IMR-90 (cell line): ENCODE measurements at regions of chr3 and their contacts with region 1.

Region 1: DNA sequence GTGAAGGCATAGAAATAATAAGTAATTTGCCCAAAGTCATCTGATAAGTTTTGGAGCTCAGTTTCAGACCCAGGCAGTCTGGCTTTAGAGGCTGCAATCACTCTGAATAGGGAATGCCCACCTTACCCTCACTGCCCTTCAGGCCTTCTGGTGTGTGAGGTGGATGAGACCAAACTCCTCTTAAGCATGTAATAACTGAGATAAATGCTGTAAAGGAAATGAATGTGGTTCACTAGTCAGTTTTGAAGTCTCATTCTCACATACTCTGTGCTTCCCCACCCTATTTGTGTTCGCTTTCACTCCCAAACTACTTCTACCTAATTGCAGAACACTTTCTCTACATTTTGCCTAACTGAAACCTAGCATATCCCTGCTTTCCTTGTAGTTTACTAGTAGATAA is 144.1 kb downstream of the FILIP1L start:
- DNase-seq: no peak
- ATAC-seq: no peak
- H3K4me3 ChIP-seq: no peak overlapping the region
- H3K27ac ChIP-seq: no peak overlapping the region
- H3K4me1 ChIP-seq: peaks cover 12% of the 10 kb centered on the region
- H3K27me3 ChIP-seq: no peaks in the 10 kb centered on the region
- CTCF ChIP-seq: no peak
- POLR2A ChIP-seq: no peak
- RAD21 ChIP-seq: no peak

Region 2: GRCh38 chr3:100023150-100023549 is 53.0 kb after region 1 on chr3:
- CTCF ChIA-PET with region 1: no interaction called
- POLR2A ChIA-PET with region 1: no interaction called
- dilution Hi-C with region 1: no loop called
- in situ Hi-C with region 1: no loop called
- intact Hi-C with region 1: loop called (anchors 5 kb)
- DNase-seq: peak; percentile 14
- ATAC-seq: peak; percentile 35; the same call in 1 of the 2 replicates
- H3K4me3 ChIP-seq: no peak overlapping the region
- H3K27ac ChIP-seq: no peak overlapping the region
- H3K4me1 ChIP-seq: peaks cover 11% of the 10 kb centered on the region
- H3K27me3 ChIP-seq: no peaks in the 10 kb centered on the region
- CTCF ChIP-seq: no peak
- POLR2A ChIP-seq: no peak
- RAD21 ChIP-seq: no peak

Region 3: GRCh38 chr3:100159331-100160153 is 189.3 kb after region 1 on chr3:
- CTCF ChIA-PET with region 1: no interaction called
- POLR2A ChIA-PET with region 1: no interaction called
- dilution Hi-C with region 1: no loop called
- in situ Hi-C with region 1: no loop called
- intact Hi-C with region 1: no loop called
- DNase-seq: peak; percentile 84
- ATAC-seq: peak; percentile 83
- H3K4me3 ChIP-seq: no peak overlapping the region
- H3K27ac ChIP-seq: peak overlapping the region; percentile 69; the same call in 1 of the 2 replicates
- H3K4me1 ChIP-seq: peaks cover 5% of the 10 kb centered on the region
- H3K27me3 ChIP-seq: no peaks in the 10 kb centered on the region
- CTCF ChIP-seq: no peak
- POLR2A ChIP-seq: no peak
- RAD21 ChIP-seq: no peak